ENCODE measurements at regions of chr10 and their contacts with region 1.

Region 1: GRCh38 chr10:74826142-74827044 is at the start of gene KAT6B:
- DNase-seq: peak; percentile 100

Region 2: GRCh38 chr10:74262856-74263255 is 563.5 kb before region 1 on chr10:
- intact Hi-C with region 1: loop called (anchors 10 kb)
- DNase-seq: no peak

Region 3: DNA sequence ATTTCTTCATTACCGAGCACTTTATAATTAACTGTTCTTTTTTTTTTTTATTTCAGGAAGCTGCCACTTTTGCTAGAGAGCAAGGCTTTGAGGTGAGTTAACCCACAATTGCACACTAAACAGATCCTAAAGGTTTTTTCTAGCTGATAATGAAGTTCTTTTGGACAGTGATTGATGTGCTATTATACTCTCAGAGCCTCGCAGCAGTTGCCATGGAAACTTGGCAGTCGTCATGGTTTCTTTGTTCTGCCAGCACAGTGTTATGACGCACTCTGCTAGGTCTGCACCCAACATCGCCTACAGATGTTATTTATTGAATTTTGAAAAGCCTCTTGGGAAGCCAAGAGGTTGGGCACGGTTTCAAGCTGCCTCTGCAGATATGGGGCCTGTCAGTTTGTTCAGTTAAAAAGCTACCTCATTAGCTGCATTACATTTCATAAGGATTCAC is 237.1 kb before region 1 on chr10:
- intact Hi-C with region 1: loop called (anchors 10 kb)
- DNase-seq: peak; percentile 64 to 95 (median 77)

Region 4: DNA sequence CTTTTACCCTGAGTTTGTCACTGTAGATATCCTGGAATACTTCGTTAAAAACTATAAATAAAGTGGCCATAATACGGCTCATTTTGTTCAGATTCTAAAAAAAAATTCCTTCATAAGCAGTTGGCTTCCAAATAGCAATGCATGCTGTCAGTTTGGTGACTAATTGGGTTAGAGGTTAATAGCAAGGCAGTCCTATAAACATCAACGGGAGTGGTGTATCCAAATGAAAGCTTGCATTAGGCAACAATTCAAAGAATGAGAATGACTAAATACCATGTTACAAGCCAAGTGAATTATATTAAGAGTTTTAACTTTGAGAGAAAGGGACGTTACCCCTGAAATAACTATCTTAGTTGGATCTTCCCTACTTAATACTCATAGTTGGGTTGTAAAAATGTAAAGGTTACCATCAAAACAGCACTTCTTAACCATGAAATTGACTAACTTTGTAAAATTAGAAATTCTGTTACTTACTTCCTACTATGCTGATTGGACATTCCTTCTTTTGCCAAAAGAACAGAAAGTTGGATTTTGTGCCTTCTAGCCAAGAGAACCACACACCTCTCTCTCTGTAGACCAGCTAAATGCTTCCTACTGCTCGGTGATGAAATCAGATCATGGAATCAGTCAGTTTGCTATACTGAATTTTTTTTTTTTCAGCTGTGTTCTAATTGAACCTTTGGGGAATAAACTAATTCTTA is 98.0 kb after region 1 on chr10:
- intact Hi-C with region 1: loop called (anchors 10 kb)
- DNase-seq: no peak

Region 5: DNA sequence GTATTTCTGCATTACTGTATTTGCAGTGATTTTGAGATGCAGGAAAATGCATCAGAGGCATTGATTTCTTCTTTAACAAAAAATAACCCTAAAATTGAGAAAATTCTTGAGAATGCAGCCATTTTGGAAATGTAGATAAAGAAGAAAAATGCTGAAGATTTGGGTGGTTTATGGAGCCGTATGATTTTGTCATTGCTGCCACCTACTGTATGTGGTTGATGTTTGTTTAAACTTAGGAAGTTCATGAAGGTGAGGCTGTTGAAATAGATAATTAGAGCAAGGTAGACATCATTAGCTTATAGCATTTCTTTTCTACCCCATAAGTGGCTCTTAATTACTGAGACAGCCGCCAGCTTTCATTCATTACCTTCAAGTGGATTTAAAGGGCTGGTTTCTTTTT is 193.0 kb after region 1 on chr10:
- intact Hi-C with region 1: loop called (anchors 5 kb)
- DNase-seq: no peak

Region 6: GRCh38 chr10:75099952-75100763 is 273.8 kb after region 1 on chr10:
- intact Hi-C with region 1: loop called (anchors 5 kb)
- DNase-seq: peak; percentile 69 to 97 (median 86)

Region 7: GRCh38 chr10:75395066-75395931 is 568.9 kb after region 1 on chr10:
- intact Hi-C with region 1: no loop called
- DNase-seq: peak in 1 of 10 donors; percentile 71